Transverse colon (tissue), 4 donors: ENCODE measurements at regions of chr18 and their contacts with region 1.

Region 1: DNA sequence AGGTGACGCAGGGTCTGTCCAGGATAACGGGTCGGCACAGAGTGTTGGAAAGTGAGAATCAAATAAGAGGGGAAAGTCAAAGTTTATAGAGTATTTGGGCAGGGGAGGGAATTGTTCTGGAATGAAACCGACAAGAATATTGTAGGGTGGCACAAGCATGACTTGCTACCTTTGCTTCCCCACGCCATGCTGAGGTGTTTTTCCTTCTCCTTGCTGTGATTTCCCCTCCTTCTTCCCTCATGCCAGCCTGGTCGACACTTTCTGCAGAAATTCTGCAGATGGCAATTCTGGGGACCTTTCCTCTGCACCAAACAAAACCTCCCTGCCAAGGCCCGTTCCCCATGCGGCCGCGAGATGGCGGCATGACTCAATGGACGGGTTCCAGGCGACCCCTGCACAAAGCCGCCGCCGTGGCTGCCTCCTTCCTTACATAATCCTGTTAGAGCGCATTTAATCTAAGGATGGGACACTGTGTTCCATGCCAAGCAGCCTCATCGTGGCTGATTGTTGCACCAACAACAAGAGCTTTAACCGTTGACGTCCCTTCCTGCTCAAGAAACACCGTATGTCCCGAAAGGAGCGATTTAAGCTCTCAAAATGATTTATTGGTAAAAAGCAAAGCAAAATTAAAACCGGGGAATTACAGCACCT is at the start of gene MRO:
- DNase-seq: peak; percentile 88
- H3K4me3 ChIP-seq: peak within 1 kb of the TSS; percentile 1 to 50 (median 24)
- H3K27ac ChIP-seq: peak within 1 kb of the TSS in 3 of 4 donors; percentile 8 to 34 (median 9)
- H3K4me1 ChIP-seq: peaks cover 8 to 24% (median 20%) of the 10 kb centered on the region in 4 donors
- H3K27me3 ChIP-seq: no peaks in the 10 kb centered on the region
- CTCF ChIP-seq: peak; percentile 88 to 94 (median 92)
- EP300 ChIP-seq: peak; percentile 32
- POLR2A ChIP-seq: no peak
- total RNA-seq, gene MRO: 0.16 to 0.27 TPM in 2 of 4 donors, not detected in the others

Region 2: DNA sequence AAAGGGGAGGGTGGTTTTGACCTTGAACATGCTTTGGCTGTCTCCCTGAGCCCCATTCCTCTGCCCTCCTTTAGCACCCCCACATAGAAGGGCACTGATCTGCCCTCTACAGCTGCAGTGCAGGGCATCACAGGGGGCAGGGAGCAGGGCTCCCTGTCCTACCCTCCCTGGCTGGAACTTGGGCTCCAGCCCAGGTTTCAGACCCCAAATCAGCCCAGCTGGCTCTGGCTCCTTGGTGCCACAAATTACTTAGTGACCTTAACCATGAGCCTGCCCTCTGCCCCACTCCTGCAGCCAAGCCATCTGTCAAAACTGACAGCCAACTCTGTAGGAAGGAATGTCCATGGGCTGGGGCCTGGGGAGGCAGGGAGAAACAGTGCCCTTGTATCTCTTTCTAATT is 154.3 kb before region 1 on chr18:
- in situ Hi-C with region 1: no loop called
- intact Hi-C with region 1: no loop called
- DNase-seq: no peak
- H3K4me3 ChIP-seq: no peak overlapping the region
- H3K27ac ChIP-seq: no peak overlapping the region
- H3K4me1 ChIP-seq: no peaks in the 10 kb centered on the region
- H3K27me3 ChIP-seq: no peaks in the 10 kb centered on the region
- CTCF ChIP-seq: no peak
- EP300 ChIP-seq: no peak
- POLR2A ChIP-seq: no peak

Region 3: GRCh38 chr18:50961974-50962373 is 142.1 kb after region 1 on chr18:
- in situ Hi-C with region 1: no loop called
- intact Hi-C with region 1: no loop called
- DNase-seq: no peak
- H3K4me3 ChIP-seq: no peak overlapping the region
- H3K27ac ChIP-seq: no peak overlapping the region
- H3K4me1 ChIP-seq: peaks cover 0 to 7% (median 5%) of the 10 kb centered on the region in 4 donors
- H3K27me3 ChIP-seq: no peaks in the 10 kb centered on the region
- CTCF ChIP-seq: no peak
- EP300 ChIP-seq: no peak
- POLR2A ChIP-seq: no peak

Region 4: GRCh38 chr18:51039138-51040112 is 219.6 kb after region 1 on chr18:
- in situ Hi-C with region 1: loop called in 3 of 4 experiments (anchors 10 to 25 kb)
- intact Hi-C with region 1: loop called (anchors 10 kb)
- DNase-seq: no peak
- H3K4me3 ChIP-seq: no peak overlapping the region
- H3K27ac ChIP-seq: no peak overlapping the region
- H3K4me1 ChIP-seq: peaks cover 43 to 90% (median 84%) of the 10 kb centered on the region in 4 donors
- H3K27me3 ChIP-seq: no peaks in the 10 kb centered on the region
- CTCF ChIP-seq: no peak
- EP300 ChIP-seq: no peak
- POLR2A ChIP-seq: no peak

Region 5: GRCh38 chr18:51051105-51051712 is 231.4 kb after region 1 on chr18:
- in situ Hi-C with region 1: loop called (anchors 5 to 25 kb)
- intact Hi-C with region 1: no loop called
- DNase-seq: no peak
- H3K4me3 ChIP-seq: no peak overlapping the region
- H3K27ac ChIP-seq: no peak overlapping the region
- H3K4me1 ChIP-seq: peaks cover 0 to 13% (median 3%) of the 10 kb centered on the region in 4 donors
- H3K27me3 ChIP-seq: no peaks in the 10 kb centered on the region
- CTCF ChIP-seq: peak; percentile 67 to 78 (median 71)
- EP300 ChIP-seq: no peak
- POLR2A ChIP-seq: no peak